T-cell (primary cell): ENCODE measurements at regions of chr7 and their contacts with region 1.

Region 1: DNA sequence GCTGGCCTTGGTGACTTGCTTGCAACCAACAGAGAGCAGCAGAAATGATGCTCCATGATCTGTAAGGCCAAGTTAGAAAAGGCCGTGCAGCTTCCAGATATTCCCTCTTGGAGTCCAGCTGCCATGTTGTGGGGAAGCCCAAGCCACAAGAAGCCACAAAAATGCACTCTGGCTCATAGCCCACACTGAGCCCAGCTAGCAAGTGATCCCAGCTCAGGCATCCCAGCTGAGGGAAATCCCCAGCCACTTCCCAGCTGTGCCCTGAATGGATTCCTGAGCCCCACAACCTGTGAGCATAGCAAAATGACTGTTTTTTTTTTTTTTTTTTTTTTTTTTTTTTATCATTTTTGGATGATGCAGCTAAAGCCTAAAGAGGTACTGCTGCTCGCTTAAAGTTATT is 11.1 kb upstream of the SDK1 start:
- DNase-seq: no peak
- ATAC-seq: no peak
- H3K4me3 ChIP-seq: no peak overlapping the region
- H3K4me3 Mint-ChIP-seq: no peak overlapping the region
- H3K27ac ChIP-seq: no peak overlapping the region
- H3K27ac Mint-ChIP-seq: no peak overlapping the region
- H3K4me1 ChIP-seq: no peaks in the 10 kb centered on the region
- H3K4me1 Mint-ChIP-seq: no peaks in the 10 kb centered on the region
- H3K27me3 ChIP-seq: peaks cover 2 to 13% of the 10 kb centered on the region in 2 experiments
- H3K27me3 Mint-ChIP-seq: peaks cover 12 to 19% of the 10 kb centered on the region in 2 donors

Region 2: GRCh38 chr7:2757904-2758672 is 531.9 kb before region 1 on chr7:
- CTCF ChIA-PET with region 1: no interaction called
- POLR2A ChIA-PET with region 1: interaction called in 1 of 2 experiments, 16 read pairs
- DNase-seq: peak in 8 of 35 experiments; percentile 14 to 41 (median 27)
- ATAC-seq: peak; percentile 72 to 82 (median 80)
- H3K4me3 ChIP-seq: no peak overlapping the region
- H3K4me3 Mint-ChIP-seq: peak overlapping the region in 2 of 3 donors; percentile 6 to 60
- H3K27ac ChIP-seq: peak overlapping the region; percentile 19
- H3K27ac Mint-ChIP-seq: peak overlapping the region; percentile 91 to 96
- H3K4me1 ChIP-seq: peaks cover 0 to 30% of the 10 kb centered on the region in 2 experiments
- H3K4me1 Mint-ChIP-seq: peaks cover 35 to 40% (median 39%) of the 10 kb centered on the region in 3 donors
- H3K27me3 ChIP-seq: no peaks in the 10 kb centered on the region
- H3K27me3 Mint-ChIP-seq: no peaks in the 10 kb centered on the region

Region 3: DNA sequence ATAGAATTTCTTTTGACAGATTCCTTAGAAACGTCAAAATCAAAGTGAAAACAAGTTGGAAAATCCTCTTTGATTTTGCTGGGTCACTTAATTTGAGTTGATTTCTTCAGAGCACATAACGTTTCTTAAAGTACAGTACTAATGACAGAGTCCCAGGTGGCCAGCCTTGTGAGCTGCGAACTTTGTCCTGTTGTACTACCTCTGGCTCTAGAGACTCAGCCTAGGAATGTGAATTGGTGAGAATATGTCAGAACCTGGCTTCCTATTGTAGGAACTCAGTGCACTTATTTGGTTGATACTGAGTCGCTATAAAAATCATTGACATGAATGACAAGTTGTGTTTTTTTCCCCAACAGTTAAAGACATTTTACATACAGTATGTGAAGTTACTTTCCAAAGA is 31.2 kb after region 1 on chr7:
- CTCF ChIA-PET with region 1: no interaction called
- POLR2A ChIA-PET with region 1: interaction called in 1 of 2 experiments, 16 read pairs
- DNase-seq: no peak
- ATAC-seq: no peak
- H3K4me3 ChIP-seq: no peak overlapping the region
- H3K4me3 Mint-ChIP-seq: no peak overlapping the region
- H3K27ac ChIP-seq: no peak overlapping the region
- H3K27ac Mint-ChIP-seq: no peak overlapping the region
- H3K4me1 ChIP-seq: no peaks in the 10 kb centered on the region
- H3K4me1 Mint-ChIP-seq: peaks cover 2 to 8% (median 3%) of the 10 kb centered on the region in 3 donors
- H3K27me3 ChIP-seq: peaks cover 0 to 5% of the 10 kb centered on the region in 2 experiments
- H3K27me3 Mint-ChIP-seq: peaks cover 0 to 5% of the 10 kb centered on the region in 2 donors